IMR-90 (cell line): ENCODE measurements at regions of chrX and their contacts with region 1.

Region 1: GRCh38 chrX:46573331-46573891 is at the start of gene CHST7:
- DNase-seq: peak; percentile 52
- ATAC-seq: peak; percentile 87
- H3K4me3 ChIP-seq: peak within 1 kb of the TSS; percentile 55
- H3K27ac ChIP-seq: peak within 1 kb of the TSS; percentile 23
- H3K4me1 ChIP-seq: peaks cover 2% of the 10 kb centered on the region; the same call in 1 of the 2 replicates
- H3K27me3 ChIP-seq: no peaks in the 10 kb centered on the region
- CTCF ChIP-seq: peak; percentile 39
- POLR2A ChIP-seq: peak; percentile 44; the same call in 1 of the 2 replicates
- RAD21 ChIP-seq: peak; percentile 41
- total RNA-seq, gene CHST7: 2.9 and 3.3 TPM in 2 replicates

Region 2: DNA sequence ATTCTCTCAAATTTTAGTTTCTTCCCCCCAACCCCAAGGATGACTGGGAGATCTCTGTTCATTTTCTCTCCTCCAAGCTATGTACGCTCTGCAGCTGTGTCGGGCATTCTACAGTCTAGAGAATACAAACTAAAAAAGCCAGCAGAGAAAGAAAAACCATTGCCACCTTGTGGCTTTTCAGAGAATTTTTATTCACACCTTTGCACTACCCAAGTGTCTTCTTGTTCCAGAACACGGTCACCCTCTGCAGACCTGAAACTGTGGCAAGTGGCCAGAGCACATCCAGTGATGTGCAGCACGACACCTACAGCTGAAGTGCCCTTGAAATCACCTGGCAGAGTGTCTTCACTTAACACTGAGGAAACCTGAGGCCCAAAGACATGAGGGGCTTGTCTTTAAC is 68.7 kb after region 1 on chrX:
- CTCF ChIA-PET with region 1: interaction called, 3 read pairs
- POLR2A ChIA-PET with region 1: no interaction called
- dilution Hi-C with region 1: no loop called
- in situ Hi-C with region 1: no loop called
- intact Hi-C with region 1: loop called (anchors 1 kb)
- DNase-seq: peak; percentile 17
- ATAC-seq: peak; percentile 57
- H3K4me3 ChIP-seq: no peak overlapping the region
- H3K27ac ChIP-seq: no peak overlapping the region
- H3K4me1 ChIP-seq: no peaks in the 10 kb centered on the region
- H3K27me3 ChIP-seq: peaks cover 2% of the 10 kb centered on the region; the same call in 1 of the 2 replicates
- CTCF ChIP-seq: peak; percentile 35
- POLR2A ChIP-seq: no peak
- RAD21 ChIP-seq: peak; percentile 39

Region 3: DNA sequence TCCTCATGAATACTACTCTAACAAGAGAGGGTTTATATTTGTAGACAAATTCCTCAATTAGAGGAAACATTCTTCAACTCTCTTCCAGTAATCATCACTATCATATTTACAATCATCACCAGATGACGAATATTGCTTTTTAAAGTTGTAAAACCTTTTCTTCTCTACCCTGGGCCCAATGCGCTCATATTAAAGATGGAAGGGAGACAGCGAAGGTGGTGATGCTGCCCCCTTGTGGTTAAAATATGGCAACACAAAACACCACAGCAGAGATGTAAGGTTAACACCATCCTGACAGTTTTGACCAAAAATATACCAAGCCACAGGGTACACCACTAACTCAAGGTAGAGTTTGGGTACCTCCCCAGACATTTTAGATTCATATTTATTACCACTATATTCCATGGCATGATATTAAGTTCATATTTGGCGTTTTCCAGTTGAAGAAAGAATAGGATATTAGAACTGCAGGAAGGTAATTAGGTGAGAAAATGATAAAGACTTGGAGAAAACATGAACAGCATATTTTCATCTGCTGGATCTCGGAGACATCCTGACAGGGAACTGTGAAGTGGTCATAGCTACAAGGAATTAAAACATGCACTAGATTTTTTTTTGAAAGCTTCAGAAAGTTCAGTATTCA is 112.7 kb after region 1 on chrX:
- CTCF ChIA-PET with region 1: no interaction called
- POLR2A ChIA-PET with region 1: no interaction called
- dilution Hi-C with region 1: no loop called
- in situ Hi-C with region 1: no loop called
- intact Hi-C with region 1: loop called (anchors 5 kb)
- DNase-seq: peak; percentile 41
- ATAC-seq: peak; percentile 80
- H3K4me3 ChIP-seq: no peak overlapping the region
- H3K27ac ChIP-seq: no peak overlapping the region
- H3K4me1 ChIP-seq: peaks cover 5% of the 10 kb centered on the region; the same call in 1 of the 2 replicates
- H3K27me3 ChIP-seq: peaks cover 4% of the 10 kb centered on the region; the same call in 1 of the 2 replicates
- CTCF ChIP-seq: peak; percentile 61
- POLR2A ChIP-seq: no peak
- RAD21 ChIP-seq: peak; percentile 57

Region 4: DNA sequence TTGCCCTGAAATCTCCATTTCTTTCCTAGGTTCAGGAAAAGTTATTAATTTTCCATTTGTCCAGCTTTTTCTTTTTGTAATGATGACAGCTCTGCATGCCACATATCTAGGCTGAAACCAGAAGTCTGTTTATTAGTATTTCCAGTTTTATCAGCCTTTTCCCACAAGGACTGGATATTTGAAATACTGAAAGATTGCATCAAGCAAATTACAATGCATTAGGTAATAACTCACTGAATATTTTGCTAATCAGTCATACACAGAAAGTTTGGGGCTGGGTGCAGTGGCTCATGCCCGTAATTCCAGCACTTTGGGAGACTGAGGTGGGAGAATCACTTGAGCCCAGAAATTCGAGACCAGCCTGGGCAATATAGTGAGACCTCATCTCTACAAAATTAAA is 164.1 kb after region 1 on chrX:
- CTCF ChIA-PET with region 1: no interaction called
- POLR2A ChIA-PET with region 1: no interaction called
- dilution Hi-C with region 1: no loop called
- in situ Hi-C with region 1: no loop called
- intact Hi-C with region 1: no loop called
- DNase-seq: peak; percentile 73
- ATAC-seq: peak; percentile 67
- H3K4me3 ChIP-seq: no peak overlapping the region
- H3K27ac ChIP-seq: peak overlapping the region; percentile 33; the same call in 1 of the 2 replicates
- H3K4me1 ChIP-seq: peaks cover 7% of the 10 kb centered on the region
- H3K27me3 ChIP-seq: no peaks in the 10 kb centered on the region
- CTCF ChIP-seq: no peak
- POLR2A ChIP-seq: no peak
- RAD21 ChIP-seq: no peak

Region 5: GRCh38 chrX:46796574-46797191 is 223.3 kb after region 1 on chrX:
- CTCF ChIA-PET with region 1: no interaction called
- POLR2A ChIA-PET with region 1: no interaction called
- dilution Hi-C with region 1: no loop called
- in situ Hi-C with region 1: no loop called
- intact Hi-C with region 1: loop called (anchors 5 kb)
- DNase-seq: peak; percentile 64
- ATAC-seq: peak; percentile 71
- H3K4me3 ChIP-seq: no peak overlapping the region
- H3K27ac ChIP-seq: no peak overlapping the region
- H3K4me1 ChIP-seq: 0 out of 2 replicates have a peak, but pooled peaks cover 2% of the 10 kb centered on the region
- H3K27me3 ChIP-seq: no peaks in the 10 kb centered on the region; the same call in 1 of the 2 replicates
- CTCF ChIP-seq: peak; percentile 76
- POLR2A ChIP-seq: no peak
- RAD21 ChIP-seq: peak; percentile 90